Transverse colon (tissue), 4 donors: ENCODE measurements at regions of chr18 and their contacts with region 1.

Region 1: GRCh38 chr18:54086046-54086802 is 138.2 kb downstream of the MBD2 start:
- DNase-seq: no peak
- H3K4me3 ChIP-seq: no peak overlapping the region
- H3K27ac ChIP-seq: no peak overlapping the region
- H3K4me1 ChIP-seq: no peaks in the 10 kb centered on the region
- H3K27me3 ChIP-seq: no peaks in the 10 kb centered on the region
- CTCF ChIP-seq: no peak
- EP300 ChIP-seq: no peak
- POLR2A ChIP-seq: no peak

Region 2: DNA sequence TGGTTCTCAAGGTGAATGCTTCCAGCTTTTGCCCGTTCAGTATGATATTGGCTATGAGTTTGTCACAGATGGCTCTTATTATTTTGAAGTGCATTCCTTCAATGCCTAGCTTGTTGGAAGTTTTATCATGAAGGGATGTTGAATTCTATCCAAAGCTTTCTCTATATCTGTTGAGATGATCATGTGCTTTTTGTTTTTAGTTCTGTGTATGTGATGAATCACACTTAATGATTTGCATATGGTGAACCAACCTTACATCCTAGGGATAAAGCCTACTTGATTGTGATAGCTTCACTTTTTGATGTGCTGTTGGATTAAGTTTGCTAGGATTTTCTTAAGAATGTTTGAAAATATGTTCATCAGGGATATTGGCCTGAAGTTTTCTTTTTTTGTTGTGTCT is 26.1 kb after region 1 on chr18:
- in situ Hi-C with region 1: no loop called
- intact Hi-C with region 1: loop called (anchors 2 kb)
- DNase-seq: no peak
- H3K4me3 ChIP-seq: no peak overlapping the region
- H3K27ac ChIP-seq: no peak overlapping the region
- H3K4me1 ChIP-seq: no peaks in the 10 kb centered on the region
- H3K27me3 ChIP-seq: no peaks in the 10 kb centered on the region
- CTCF ChIP-seq: no peak
- EP300 ChIP-seq: no peak
- POLR2A ChIP-seq: no peak